ENCODE measurements at regions of chr1 and their contacts with region 1.

Region 1: GRCh38 chr1:38834937-38835827 is 24.4 kb downstream of the RRAGC start:
- DNase-seq: peak; percentile 87
- ATAC-seq: peak; percentile 91
- H3K4me3 ChIP-seq: no peak overlapping the region
- H3K27ac ChIP-seq: no peak overlapping the region
- H3K4me1 ChIP-seq: no peaks in the 10 kb centered on the region
- H3K27me3 ChIP-seq: peaks cover 17% of the 10 kb centered on the region
- CTCF ChIP-seq: peak; percentile 81
- POLR2A ChIP-seq: no peak
- RAD21 ChIP-seq: peak; percentile 85

Region 2: GRCh38 chr1:37989361-37989930 is 845.7 kb before region 1 on chr1:
- CTCF ChIA-PET with region 1: no interaction called
- POLR2A ChIA-PET with region 1: no interaction called
- dilution Hi-C with region 1: no loop called
- in situ Hi-C with region 1: no loop called
- intact Hi-C with region 1: loop called (anchors 1 kb)
- DNase-seq: peak; percentile 23
- ATAC-seq: peak; percentile 44
- H3K4me3 ChIP-seq: peak overlapping the region; percentile 57
- H3K27ac ChIP-seq: peak overlapping the region; percentile 64
- H3K4me1 ChIP-seq: no peaks in the 10 kb centered on the region
- H3K27me3 ChIP-seq: no peaks in the 10 kb centered on the region
- CTCF ChIP-seq: no peak
- POLR2A ChIP-seq: no peak
- RAD21 ChIP-seq: no peak

Region 3: DNA sequence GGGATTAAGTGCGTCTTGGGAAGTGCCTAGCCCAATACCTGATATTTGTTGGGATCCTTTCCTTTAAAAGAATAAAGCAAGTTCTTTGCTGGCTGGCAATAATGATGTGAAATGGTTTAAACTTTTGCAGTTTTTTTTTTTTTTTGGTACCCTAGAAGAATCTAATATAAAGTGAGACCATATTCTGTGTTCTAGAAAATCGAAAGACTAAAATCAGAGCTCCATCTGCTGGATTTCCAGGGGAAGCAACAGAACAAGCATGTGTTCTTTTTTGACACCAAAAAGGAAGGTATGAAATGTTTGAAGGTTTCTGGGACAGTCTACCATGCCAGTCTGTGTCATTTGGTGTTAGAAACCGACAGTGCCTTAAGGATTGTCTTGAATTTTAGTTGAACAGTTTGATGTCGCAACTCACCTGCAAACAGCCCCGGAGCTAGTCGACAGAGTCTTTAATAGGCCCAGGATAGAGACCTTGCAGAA is 816.3 kb before region 1 on chr1:
- CTCF ChIA-PET with region 1: interaction called, 8 read pairs
- POLR2A ChIA-PET with region 1: no interaction called
- dilution Hi-C with region 1: no loop called
- in situ Hi-C with region 1: no loop called
- intact Hi-C with region 1: loop called (anchors 2 kb)
- DNase-seq: peak; percentile 60
- ATAC-seq: peak; percentile 50
- H3K4me3 ChIP-seq: no peak overlapping the region
- H3K27ac ChIP-seq: peak overlapping the region; percentile 25; the same call in 1 of the 2 replicates
- H3K4me1 ChIP-seq: peaks cover 9% of the 10 kb centered on the region
- H3K27me3 ChIP-seq: no peaks in the 10 kb centered on the region
- CTCF ChIP-seq: peak; percentile 81
- POLR2A ChIP-seq: no peak
- RAD21 ChIP-seq: peak; percentile 72

Region 4: DNA sequence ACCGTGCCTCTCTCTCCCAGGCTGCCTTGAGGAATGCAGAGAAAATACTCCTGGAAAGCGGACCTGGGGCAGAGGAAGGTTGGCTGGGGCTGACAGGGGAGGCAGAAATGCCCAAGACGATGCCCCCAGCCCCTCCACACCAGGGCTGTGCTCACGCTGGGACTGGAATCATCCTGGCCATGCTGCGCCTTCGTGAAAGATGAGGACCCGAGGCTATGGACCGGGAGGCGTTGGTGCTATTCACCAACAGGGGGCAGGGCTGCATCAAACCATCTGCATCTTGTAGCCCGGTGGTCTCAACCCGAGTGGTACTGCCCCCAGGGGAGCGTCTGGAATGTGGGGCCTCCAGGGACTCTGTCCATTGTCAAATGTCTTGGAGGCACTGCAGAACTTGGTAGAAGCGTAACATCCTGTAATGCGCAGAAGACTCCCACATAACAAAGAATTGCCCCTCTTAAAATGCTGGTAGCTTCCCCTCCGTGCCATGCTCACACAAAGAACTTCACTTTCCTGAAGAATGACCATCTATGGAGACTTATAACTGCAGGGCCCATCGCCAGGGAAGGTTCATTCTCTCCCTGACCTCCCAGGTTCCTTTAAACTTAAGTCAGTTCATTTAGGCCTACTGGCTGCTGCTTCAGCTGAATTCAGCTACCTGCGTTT is 226.8 kb before region 1 on chr1:
- CTCF ChIA-PET with region 1: no interaction called
- POLR2A ChIA-PET with region 1: no interaction called
- dilution Hi-C with region 1: no loop called
- in situ Hi-C with region 1: no loop called
- intact Hi-C with region 1: loop called (anchors 1 kb)
- DNase-seq: peak; percentile 4
- ATAC-seq: peak; percentile 57; the same call in 1 of the 2 replicates
- H3K4me3 ChIP-seq: no peak overlapping the region
- H3K27ac ChIP-seq: no peak overlapping the region
- H3K4me1 ChIP-seq: no peaks in the 10 kb centered on the region
- H3K27me3 ChIP-seq: no peaks in the 10 kb centered on the region; the same call in 1 of the 2 replicates
- CTCF ChIP-seq: peak; percentile 39
- POLR2A ChIP-seq: no peak
- RAD21 ChIP-seq: peak; percentile 44

Region 5: GRCh38 chr1:39132505-39133339 is 297.5 kb after region 1 on chr1:
- CTCF ChIA-PET with region 1: no interaction called
- POLR2A ChIA-PET with region 1: no interaction called
- dilution Hi-C with region 1: no loop called
- in situ Hi-C with region 1: no loop called
- intact Hi-C with region 1: no loop called
- DNase-seq: peak; percentile 57
- ATAC-seq: peak; percentile 22
- H3K4me3 ChIP-seq: no peak overlapping the region
- H3K27ac ChIP-seq: peak overlapping the region; percentile 51
- H3K4me1 ChIP-seq: peaks cover 37% of the 10 kb centered on the region
- H3K27me3 ChIP-seq: no peaks in the 10 kb centered on the region
- CTCF ChIP-seq: no peak
- POLR2A ChIP-seq: no peak
- RAD21 ChIP-seq: no peak